Activated CD4-positive, alpha-beta T cell treated with anti-CD3 and anti-CD28 coated beads for 36 hours (primary cell): ENCODE measurements at regions of chr9 and their contacts with region 1.

Region 1: GRCh38 chr9:94166237-94166963 is 82.1 kb downstream of the PTPDC1 start:
- DNase-seq: peak; percentile 97
- ATAC-seq: peak; percentile 65
- H3K4me3 Mint-ChIP-seq: peak overlapping the region; percentile 89
- H3K27ac Mint-ChIP-seq: peak overlapping the region; percentile 91
- H3K4me1 Mint-ChIP-seq: peaks cover 34% of the 10 kb centered on the region
- H3K27me3 Mint-ChIP-seq: no peaks in the 10 kb centered on the region

Region 2: GRCh38 chr9:93159601-93160471 is 1006.6 kb before region 1 on chr9:
- CTCF ChIA-PET with region 1: no interaction called
- POLR2A ChIA-PET with region 1: no interaction called
- intact Hi-C with region 1: loop called in 1 of 2 experiments (anchors 10 kb)
- DNase-seq: peak; percentile 86
- ATAC-seq: peak; percentile 68
- H3K4me3 Mint-ChIP-seq: no peak overlapping the region
- H3K27ac Mint-ChIP-seq: no peak overlapping the region
- H3K4me1 Mint-ChIP-seq: peaks cover 26% of the 10 kb centered on the region
- H3K27me3 Mint-ChIP-seq: no peaks in the 10 kb centered on the region

Region 3: GRCh38 chr9:94178927-94179326 is 12.5 kb after region 1 on chr9:
- CTCF ChIA-PET with region 1: no interaction called
- POLR2A ChIA-PET with region 1: interaction called, 6 read pairs
- intact Hi-C with region 1: loop called in 1 of 2 experiments (anchors 1 kb)
- DNase-seq: no peak
- ATAC-seq: peak; percentile 73
- H3K4me3 Mint-ChIP-seq: no peak overlapping the region
- H3K27ac Mint-ChIP-seq: peak overlapping the region; percentile 60
- H3K4me1 Mint-ChIP-seq: peaks cover 85% of the 10 kb centered on the region
- H3K27me3 Mint-ChIP-seq: no peaks in the 10 kb centered on the region

Region 4: GRCh38 chr9:94259077-94259892 is 92.9 kb after region 1 on chr9 and contains the start of gene ZNF169:
- CTCF ChIA-PET with region 1: no interaction called
- POLR2A ChIA-PET with region 1: no interaction called
- intact Hi-C with region 1: loop called (anchors 1 kb)
- DNase-seq: peak; percentile 96
- ATAC-seq: peak; percentile 100
- H3K4me3 Mint-ChIP-seq: peak within 1 kb of the TSS; percentile 96
- H3K27ac Mint-ChIP-seq: peak within 1 kb of the TSS; percentile 98
- H3K4me1 Mint-ChIP-seq: peaks cover 28% of the 10 kb centered on the region
- H3K27me3 Mint-ChIP-seq: peaks cover 6% of the 10 kb centered on the region
- total RNA-seq, gene ZNF169: 6.4 to 6.7 TPM

Region 5: DNA sequence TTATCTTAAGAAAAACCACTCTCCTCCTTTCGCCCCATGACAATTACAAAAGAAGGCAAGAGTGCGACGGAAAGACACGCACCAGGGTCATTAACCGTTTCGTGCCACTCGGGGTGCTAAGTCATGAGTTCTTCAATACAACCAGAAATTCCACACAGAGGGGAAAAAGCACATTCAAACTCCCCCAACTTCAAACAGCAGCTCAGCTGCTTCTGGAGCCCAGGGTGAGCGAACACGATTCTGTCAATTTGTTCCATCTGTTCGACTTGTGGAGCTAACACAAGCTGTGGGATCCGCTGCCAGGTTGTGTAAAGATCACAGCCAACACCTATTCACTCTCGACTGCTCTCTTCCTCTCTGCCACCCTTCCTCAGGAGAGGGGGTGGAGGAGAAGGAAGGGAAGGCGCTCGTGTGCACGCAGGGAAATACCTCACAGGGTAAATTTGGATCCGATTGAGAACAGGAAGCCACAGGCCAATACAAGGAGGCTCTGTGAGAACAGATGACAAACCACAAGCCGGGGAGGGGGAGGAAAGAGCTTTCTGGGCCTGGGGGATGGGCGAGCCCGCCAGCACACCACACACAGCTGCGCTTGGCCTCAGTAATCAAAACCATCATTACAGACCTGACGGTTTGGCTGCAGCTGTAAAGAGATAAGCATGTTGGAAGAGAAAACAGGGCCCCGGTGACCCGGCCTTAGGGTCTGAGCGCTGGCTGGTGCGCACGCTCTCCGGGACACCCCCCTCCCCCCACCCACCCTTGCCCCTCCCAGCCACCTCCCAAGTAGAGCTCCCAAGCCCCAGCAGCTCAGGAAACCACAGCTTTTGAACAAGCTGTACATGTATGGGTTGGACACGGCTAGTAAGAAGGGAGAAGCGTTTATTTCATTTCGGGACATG is 1296.1 kb after region 1 on chr9:
- CTCF ChIA-PET with region 1: no interaction called
- POLR2A ChIA-PET with region 1: no interaction called
- intact Hi-C with region 1: no loop called
- DNase-seq: peak; percentile 89
- ATAC-seq: peak; percentile 94
- H3K4me3 Mint-ChIP-seq: peak overlapping the region; percentile 72
- H3K27ac Mint-ChIP-seq: peak overlapping the region; percentile 72
- H3K4me1 Mint-ChIP-seq: peaks cover 26% of the 10 kb centered on the region
- H3K27me3 Mint-ChIP-seq: peaks cover 4% of the 10 kb centered on the region